MCF 10A (cell line): ENCODE measurements at regions of chr20 and their contacts with region 1.

Region 1: DNA sequence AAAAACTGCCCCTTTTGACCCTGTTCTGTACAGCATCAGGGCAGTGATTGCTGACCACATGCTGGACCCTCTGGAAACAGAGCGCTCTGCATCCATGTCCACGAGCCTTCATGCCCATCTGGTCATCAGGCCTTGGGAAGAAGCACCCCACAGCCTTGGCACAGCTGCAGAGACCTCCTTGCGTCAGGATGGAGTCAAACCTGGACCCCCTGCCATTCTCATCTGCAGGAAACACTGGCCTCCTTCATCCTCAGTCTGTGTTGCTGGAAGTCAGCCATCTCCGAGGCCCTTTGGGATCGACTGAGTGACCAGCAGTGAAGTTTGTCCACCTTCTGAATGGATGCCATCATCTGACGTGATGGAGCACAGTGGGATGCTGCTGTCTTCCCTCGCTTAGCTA is 2138.3 kb upstream of the DEFB115 start:
- DNase-seq: no peak
- H3K4me3 Mint-ChIP-seq: no peak overlapping the region
- H3K27ac Mint-ChIP-seq: no peak overlapping the region
- H3K4me1 Mint-ChIP-seq: no peaks in the 10 kb centered on the region
- H3K27me3 Mint-ChIP-seq: no peaks in the 10 kb centered on the region
- CTCF ChIP-seq: no peak

Region 2: DNA sequence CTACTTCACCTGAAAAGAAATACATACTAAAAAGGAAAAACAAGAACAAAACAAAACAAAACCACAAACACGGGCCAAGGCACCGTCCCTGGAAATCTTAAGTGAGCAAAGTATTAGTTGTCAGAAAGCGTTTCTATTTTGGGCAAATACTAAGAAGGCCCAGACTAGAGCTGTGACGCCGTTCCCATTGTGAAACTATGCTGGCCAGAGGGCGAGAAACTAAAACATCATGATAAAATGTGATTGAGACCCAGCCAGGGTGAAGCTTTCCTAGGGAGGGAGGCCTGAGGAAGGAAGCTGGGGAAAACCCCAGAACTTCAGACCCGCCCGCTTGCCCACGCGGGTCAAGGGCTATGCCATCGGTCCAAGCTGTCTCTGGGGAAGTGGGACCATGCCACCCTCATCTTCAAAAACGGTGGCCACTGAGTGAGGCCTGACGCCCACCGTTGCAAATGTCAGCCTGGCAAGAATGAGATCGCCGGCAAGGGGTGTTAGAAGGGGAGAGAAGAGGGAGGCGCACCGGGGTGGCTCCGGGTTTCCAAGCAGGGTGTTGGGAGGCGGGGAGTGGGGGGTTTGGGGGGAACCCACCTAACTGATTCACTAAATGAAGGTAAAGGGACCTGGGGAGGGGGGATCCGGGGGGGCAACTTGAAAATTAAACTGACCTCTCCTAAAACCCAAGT is 187.4 kb after region 1 on chr20:
- CTCF ChIA-PET with region 1: no interaction called
- POLR2A ChIA-PET with region 1: no interaction called
- intact Hi-C with region 1: no loop called
- DNase-seq: no peak
- H3K4me3 Mint-ChIP-seq: no peak overlapping the region
- H3K27ac Mint-ChIP-seq: no peak overlapping the region
- H3K4me1 Mint-ChIP-seq: no peaks in the 10 kb centered on the region
- H3K27me3 Mint-ChIP-seq: no peaks in the 10 kb centered on the region
- CTCF ChIP-seq: no peak

Region 3: GRCh38 chr20:29873946-29874345 is 754.8 kb after region 1 on chr20:
- CTCF ChIA-PET with region 1: no interaction called
- POLR2A ChIA-PET with region 1: no interaction called
- intact Hi-C with region 1: loop called (anchors 10 kb)
- DNase-seq: no peak
- H3K4me3 Mint-ChIP-seq: no peak overlapping the region
- H3K27ac Mint-ChIP-seq: no peak overlapping the region
- H3K4me1 Mint-ChIP-seq: no peaks in the 10 kb centered on the region
- H3K27me3 Mint-ChIP-seq: no peaks in the 10 kb centered on the region
- CTCF ChIP-seq: no peak